ENCODE measurements at regions of chr16 and their contacts with region 1.

Region 1: GRCh38 chr16:89641458-89642119 is 15.9 kb downstream of the CHMP1A start:
- DNase-seq: no peak
- H3K4me3 ChIP-seq: no peak overlapping the region
- H3K27ac ChIP-seq: no peak overlapping the region
- H3K4me1 ChIP-seq: no peaks in the 10 kb centered on the region
- H3K27me3 ChIP-seq: no peaks in the 10 kb centered on the region
- CTCF ChIP-seq: no peak

Region 2: GRCh38 chr16:89574681-89575246 is 66.8 kb before region 1 on chr16:
- CTCF ChIA-PET with region 1: interaction called, 3 read pairs
- POLR2A ChIA-PET with region 1: no interaction called
- intact Hi-C with region 1: loop called (anchors 1 kb)
- DNase-seq: peak; percentile 46 to 86
- H3K4me3 ChIP-seq: peak overlapping the region; percentile 76
- H3K27ac ChIP-seq: no peak overlapping the region
- H3K4me1 ChIP-seq: peaks cover 7% of the 10 kb centered on the region; the same call in 1 of the 2 replicates
- H3K27me3 ChIP-seq: no peaks in the 10 kb centered on the region
- CTCF ChIP-seq: peak; percentile 65; the same call in 1 of the 2 replicates

Region 3: GRCh38 chr16:89602273-89602951 is 39.2 kb before region 1 on chr16:
- CTCF ChIA-PET with region 1: no interaction called
- POLR2A ChIA-PET with region 1: no interaction called
- intact Hi-C with region 1: no loop called
- DNase-seq: peak; percentile 41 to 44
- H3K4me3 ChIP-seq: peak overlapping the region; percentile 22; the same call in 1 of the 2 replicates
- H3K27ac ChIP-seq: no peak overlapping the region
- H3K4me1 ChIP-seq: peaks cover 16% of the 10 kb centered on the region; the same call in 1 of the 2 replicates
- H3K27me3 ChIP-seq: no peaks in the 10 kb centered on the region
- CTCF ChIP-seq: no peak

Region 4: GRCh38 chr16:89678258-89678657 is 36.7 kb after region 1 on chr16:
- CTCF ChIA-PET with region 1: no interaction called
- POLR2A ChIA-PET with region 1: no interaction called
- intact Hi-C with region 1: no loop called
- DNase-seq: no peak
- H3K4me3 ChIP-seq: no peak overlapping the region
- H3K27ac ChIP-seq: no peak overlapping the region
- H3K4me1 ChIP-seq: no peaks in the 10 kb centered on the region
- H3K27me3 ChIP-seq: no peaks in the 10 kb centered on the region
- CTCF ChIP-seq: no peak